Mammary epithelial cell (primary cell): ENCODE measurements at regions of chr12 and their contacts with region 1.

Region 1: GRCh38 chr12:112322882-112323547 is 59.2 kb downstream of the HECTD4 start:
- DNase-seq: peak; percentile 21
- H3K4me3 ChIP-seq: no peak overlapping the region
- H3K27ac ChIP-seq: no peak overlapping the region
- H3K4me1 ChIP-seq: no peaks in the 10 kb centered on the region
- H3K27me3 ChIP-seq: no peaks in the 10 kb centered on the region
- CTCF ChIP-seq: no peak

Region 2: DNA sequence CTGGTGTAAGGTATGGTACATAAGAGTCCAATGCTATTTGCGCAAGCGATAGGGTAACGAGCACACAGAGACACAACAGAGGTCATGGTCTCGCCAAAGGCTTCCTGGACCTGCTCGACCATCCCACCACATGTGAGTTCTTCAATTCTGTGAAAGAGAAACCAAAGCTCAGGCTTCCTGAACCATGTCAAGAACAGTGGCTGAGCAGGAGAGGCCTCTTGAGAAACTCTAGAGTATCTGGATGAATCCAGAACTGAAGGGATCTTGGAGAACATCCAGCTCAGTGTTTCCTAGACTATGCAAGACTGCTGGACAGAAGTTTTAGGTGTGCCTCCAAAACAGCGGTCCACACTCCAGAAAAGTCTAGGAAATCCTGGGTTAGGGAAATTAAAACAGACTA is 83.1 kb before region 1 on chr12:
- CTCF ChIA-PET with region 1: no interaction called
- dilution Hi-C with region 1: loop called (anchors 5 kb)
- in situ Hi-C with region 1: no loop called
- intact Hi-C with region 1: no loop called
- DNase-seq: no peak
- H3K4me3 ChIP-seq: no peak overlapping the region
- H3K27ac ChIP-seq: no peak overlapping the region
- H3K4me1 ChIP-seq: no peaks in the 10 kb centered on the region
- H3K27me3 ChIP-seq: no peaks in the 10 kb centered on the region
- CTCF ChIP-seq: no peak